Naive thymus-derived CD4-positive, alpha-beta T cell (primary cell): ENCODE measurements at regions of chr9 and their contacts with region 1.

Region 1: DNA sequence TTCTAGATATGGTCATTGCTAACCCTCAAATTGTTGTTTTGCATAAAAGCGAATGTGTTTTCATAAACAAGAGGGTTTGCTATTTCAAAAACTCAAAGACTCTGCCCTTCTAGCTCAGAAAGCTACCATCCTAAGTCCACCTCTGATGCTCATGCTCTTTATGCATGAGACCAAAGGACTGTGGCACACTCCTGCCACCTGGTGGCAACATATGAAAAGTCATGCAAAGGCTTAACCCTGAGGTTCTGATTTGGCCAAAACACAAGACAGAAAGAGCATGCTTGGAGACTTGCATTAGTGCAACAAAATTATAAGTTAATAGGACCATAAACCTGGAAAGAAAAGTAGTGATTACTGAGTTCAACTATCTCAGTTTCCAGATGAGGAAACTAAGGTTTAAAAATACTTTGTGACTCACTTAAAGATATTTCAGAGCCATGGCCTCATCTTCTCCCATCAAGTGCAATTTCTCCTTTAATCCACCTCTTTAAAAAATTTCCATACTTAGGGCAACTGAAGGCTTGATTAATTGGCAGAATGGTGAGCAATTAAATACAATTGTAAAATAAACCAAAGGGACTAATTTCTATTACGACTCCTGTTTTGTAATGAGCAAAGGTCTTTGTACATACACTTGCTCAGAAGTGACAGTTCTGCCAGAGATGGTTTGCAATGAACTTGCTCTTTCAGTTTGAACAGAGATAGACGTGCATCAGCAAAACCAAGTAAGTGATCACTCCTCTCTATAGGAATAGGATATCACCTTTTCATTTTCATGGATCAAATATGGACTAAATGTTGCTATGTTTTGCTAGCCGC is 110.7 kb upstream of the RAD23B start:
- DNase-seq: peak in 8 of 9 donors; percentile 13 to 56 (median 30)
- ATAC-seq: peak; percentile 74
- H3K4me3 ChIP-seq: no peak overlapping the region
- H3K4me3 Mint-ChIP-seq: no peak overlapping the region
- H3K27ac ChIP-seq: no peak overlapping the region
- H3K27ac Mint-ChIP-seq: no peak overlapping the region
- H3K4me1 ChIP-seq: no peaks in the 10 kb centered on the region
- H3K4me1 Mint-ChIP-seq: peaks cover 0 to 27% (median 0%) of the 10 kb centered on the region in 7 donors
- H3K27me3 ChIP-seq: no peaks in the 10 kb centered on the region
- H3K27me3 Mint-ChIP-seq: peaks cover 0 to 14% (median 2%) of the 10 kb centered on the region in 5 donors

Region 2: GRCh38 chr9:105608721-105609598 is 1563.4 kb before region 1 on chr9:
- CTCF ChIA-PET with region 1: no interaction called
- POLR2A ChIA-PET with region 1: no interaction called
- intact Hi-C with region 1: loop called in 1 of 2 experiments (anchors 2 kb)
- DNase-seq: peak in 6 of 9 donors; percentile 11 to 37 (median 30)
- ATAC-seq: peak; percentile 67
- H3K4me3 ChIP-seq: no peak overlapping the region
- H3K4me3 Mint-ChIP-seq: no peak overlapping the region
- H3K27ac ChIP-seq: no peak overlapping the region
- H3K27ac Mint-ChIP-seq: no peak overlapping the region
- H3K4me1 ChIP-seq: no peaks in the 10 kb centered on the region
- H3K4me1 Mint-ChIP-seq: peaks cover 0 to 5% (median 0%) of the 10 kb centered on the region in 7 donors
- H3K27me3 ChIP-seq: no peaks in the 10 kb centered on the region
- H3K27me3 Mint-ChIP-seq: no peaks in the 10 kb centered on the region

Region 3: DNA sequence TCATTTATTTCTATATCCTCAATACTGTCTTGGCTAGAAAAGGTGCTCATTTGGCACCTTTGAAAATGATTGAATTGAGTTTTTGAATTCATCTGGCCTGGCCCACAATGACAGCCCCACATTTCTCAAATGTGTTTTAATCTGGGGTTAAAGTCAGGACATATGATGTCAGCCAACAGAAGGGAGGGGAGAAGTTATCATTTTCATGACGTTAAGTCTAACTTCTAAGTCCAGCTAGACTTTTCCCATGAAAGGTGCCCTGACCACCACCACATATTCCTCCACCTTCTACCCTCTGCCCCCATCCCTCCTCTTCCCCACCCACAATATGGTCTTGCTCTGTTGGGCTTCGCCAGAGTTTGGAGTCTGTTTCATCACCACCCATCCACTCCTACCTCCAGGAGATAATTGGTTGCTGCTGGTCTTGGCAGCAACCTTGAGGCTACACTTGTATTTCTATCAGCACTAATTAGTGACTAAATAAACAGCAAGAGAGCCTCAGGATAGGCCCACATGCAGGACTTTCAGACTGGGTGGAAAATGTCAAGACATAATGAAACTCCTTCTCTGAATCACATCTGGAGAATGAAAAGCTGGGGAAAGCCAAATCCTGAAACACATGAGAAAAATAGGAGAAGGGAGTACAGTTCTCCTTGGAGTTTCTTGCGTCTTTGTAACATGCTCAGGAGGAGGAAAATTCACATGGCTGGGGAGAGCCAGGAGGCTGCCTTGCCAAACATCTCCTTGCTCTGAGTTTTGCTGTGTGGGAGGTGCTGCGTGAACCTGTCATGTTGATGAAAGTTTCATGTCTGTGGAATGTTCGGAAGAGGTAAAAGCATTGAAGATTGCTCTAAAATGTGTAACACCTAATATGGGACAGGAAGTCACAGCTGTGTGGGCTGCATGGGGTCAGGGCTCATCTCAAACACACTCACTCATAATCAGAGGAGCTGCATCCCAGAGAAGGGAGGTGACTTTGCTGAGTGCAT is 861.9 kb after region 1 on chr9:
- CTCF ChIA-PET with region 1: no interaction called
- POLR2A ChIA-PET with region 1: no interaction called
- intact Hi-C with region 1: no loop called
- DNase-seq: no peak
- ATAC-seq: no peak
- H3K4me3 ChIP-seq: no peak overlapping the region
- H3K4me3 Mint-ChIP-seq: no peak overlapping the region
- H3K27ac ChIP-seq: no peak overlapping the region
- H3K27ac Mint-ChIP-seq: no peak overlapping the region
- H3K4me1 ChIP-seq: no peaks in the 10 kb centered on the region
- H3K4me1 Mint-ChIP-seq: no peaks in the 10 kb centered on the region
- H3K27me3 ChIP-seq: no peaks in the 10 kb centered on the region
- H3K27me3 Mint-ChIP-seq: peaks cover 0 to 4% (median 0%) of the 10 kb centered on the region in 5 donors